Esophagus muscularis mucosa (tissue), 4 donors: ENCODE measurements at regions of chr2 and their contacts with region 1.

Region 1: GRCh38 chr2:100730346-100730745 is 89.6 kb upstream of the NPAS2 start:
- DNase-seq: no peak
- H3K4me3 ChIP-seq: no peak overlapping the region
- H3K27ac ChIP-seq: no peak overlapping the region
- H3K4me1 ChIP-seq: peaks cover 10 to 11% (median 10%) of the 10 kb centered on the region in 4 donors
- H3K27me3 ChIP-seq: no peaks in the 10 kb centered on the region
- CTCF ChIP-seq: peak; percentile 55 to 64 (median 62)
- EP300 ChIP-seq: no peak
- POLR2A ChIP-seq: no peak

Region 2: DNA sequence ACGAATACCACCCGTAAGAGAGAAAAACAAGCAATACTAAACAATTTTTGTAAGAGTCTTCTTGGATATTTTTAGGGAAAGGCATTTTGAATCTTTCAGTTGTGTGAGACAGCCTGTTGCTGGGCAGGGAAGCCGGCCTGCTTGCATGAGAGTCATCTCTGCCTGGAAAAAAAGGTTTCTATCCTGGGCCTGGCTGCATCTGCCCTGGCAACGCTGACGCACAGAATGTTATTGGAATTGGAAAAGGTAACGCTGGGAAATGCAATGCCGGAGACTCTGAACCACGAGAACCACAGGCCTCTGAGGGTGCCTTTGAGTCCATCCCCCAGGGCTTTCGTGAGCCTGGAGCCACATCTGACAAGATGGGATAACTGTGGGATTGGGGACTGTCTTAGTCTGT is 71.7 kb after region 1 on chr2:
- intact Hi-C with region 1: no loop called
- DNase-seq: no peak
- H3K4me3 ChIP-seq: no peak overlapping the region
- H3K27ac ChIP-seq: peak overlapping the region; percentile 60 to 79 (median 66)
- H3K4me1 ChIP-seq: peaks cover 0 to 24% (median 23%) of the 10 kb centered on the region in 4 donors
- H3K27me3 ChIP-seq: no peaks in the 10 kb centered on the region
- CTCF ChIP-seq: no peak
- EP300 ChIP-seq: no peak
- POLR2A ChIP-seq: no peak

Region 3: DNA sequence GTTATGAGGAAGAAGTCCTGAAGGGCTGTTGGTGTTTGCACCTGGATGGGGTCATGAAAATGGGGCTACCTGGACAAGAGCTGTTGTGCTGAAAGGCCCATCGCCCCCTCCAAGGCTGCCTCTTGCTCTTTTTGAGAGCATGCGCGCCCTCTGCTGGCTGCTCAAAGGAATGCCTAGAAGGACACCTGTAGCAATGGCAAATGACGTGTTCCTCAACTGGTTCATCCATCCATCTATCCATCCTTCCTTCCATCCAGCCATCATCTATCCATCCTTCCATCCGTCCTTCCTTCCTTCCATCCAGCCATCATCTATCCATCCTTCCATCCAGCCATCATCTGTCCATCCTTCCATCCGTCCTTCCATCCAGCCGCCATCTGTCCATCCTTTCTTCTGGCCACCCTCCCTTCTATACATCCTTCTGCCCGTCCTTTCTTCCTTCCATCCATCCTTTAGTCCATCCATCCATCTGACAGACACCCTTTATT is 254.6 kb after region 1 on chr2:
- intact Hi-C with region 1: loop called (anchors 2 kb)
- DNase-seq: no peak
- H3K4me3 ChIP-seq: no peak overlapping the region
- H3K27ac ChIP-seq: no peak overlapping the region
- H3K4me1 ChIP-seq: peaks cover 0 to 12% (median 1%) of the 10 kb centered on the region in 4 donors
- H3K27me3 ChIP-seq: no peaks in the 10 kb centered on the region
- CTCF ChIP-seq: peak; percentile 82 to 90 (median 87)
- EP300 ChIP-seq: no peak
- POLR2A ChIP-seq: no peak